Breast epithelium (tissue), 4 donors: ENCODE measurements at regions of chr4 and their contacts with region 1.

Region 1: DNA sequence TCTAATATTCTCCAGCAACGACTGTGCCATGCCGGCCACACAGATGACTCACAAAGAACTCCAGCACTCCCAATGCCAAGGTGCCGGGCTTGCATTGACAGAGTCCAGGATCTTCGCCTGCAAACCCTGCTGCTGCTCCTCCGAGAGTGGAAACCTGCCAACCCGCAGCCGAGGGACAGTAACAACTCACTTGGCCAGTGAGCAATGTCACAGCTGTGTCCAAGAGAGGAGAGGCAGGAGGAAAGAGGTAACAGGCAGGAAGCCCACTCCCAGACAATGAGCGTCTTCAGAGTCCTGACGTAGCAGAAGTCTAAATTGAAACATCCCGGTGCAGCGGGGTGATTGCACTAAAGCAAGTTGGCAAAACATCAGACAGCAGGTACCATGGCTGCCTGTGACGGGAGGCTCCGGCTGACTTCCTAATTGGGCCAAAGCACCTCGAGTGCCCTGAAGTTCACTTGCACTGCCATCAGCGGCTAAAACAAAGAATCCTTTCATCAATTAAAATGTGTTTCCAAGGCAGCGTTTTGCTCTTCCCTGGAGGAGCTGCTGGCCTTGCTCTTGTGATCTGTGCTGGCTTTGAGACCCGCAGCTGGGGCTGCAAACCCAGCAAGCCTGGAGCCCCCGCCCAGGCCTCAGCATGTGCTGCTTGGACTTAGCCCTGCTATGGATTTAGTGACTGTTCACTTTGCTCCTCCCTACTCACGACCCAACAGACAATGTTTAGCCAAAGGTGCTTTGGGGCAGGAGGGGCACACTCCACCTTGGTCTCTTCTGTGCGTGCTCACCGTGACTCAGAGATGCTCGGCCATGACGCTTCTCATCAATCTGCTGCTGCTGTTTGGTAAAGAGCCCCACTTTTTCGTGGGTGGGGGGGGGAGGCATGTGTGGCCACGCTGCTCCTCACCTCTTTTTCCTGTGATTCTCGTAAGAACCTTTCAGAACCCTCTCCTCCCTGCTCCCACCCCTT is 36.5 kb downstream of the DCTD start:
- DNase-seq: peak; percentile 63 to 71
- H3K4me3 ChIP-seq: peak overlapping the region in 2 of 3 donors; percentile 37 to 50
- H3K27ac ChIP-seq: peak overlapping the region; percentile 59 to 60
- H3K4me1 ChIP-seq: no peaks in the 10 kb centered on the region
- H3K27me3 ChIP-seq: no peaks in the 10 kb centered on the region
- CTCF ChIP-seq: no peak
- POLR2A ChIP-seq: no peak

Region 2: DNA sequence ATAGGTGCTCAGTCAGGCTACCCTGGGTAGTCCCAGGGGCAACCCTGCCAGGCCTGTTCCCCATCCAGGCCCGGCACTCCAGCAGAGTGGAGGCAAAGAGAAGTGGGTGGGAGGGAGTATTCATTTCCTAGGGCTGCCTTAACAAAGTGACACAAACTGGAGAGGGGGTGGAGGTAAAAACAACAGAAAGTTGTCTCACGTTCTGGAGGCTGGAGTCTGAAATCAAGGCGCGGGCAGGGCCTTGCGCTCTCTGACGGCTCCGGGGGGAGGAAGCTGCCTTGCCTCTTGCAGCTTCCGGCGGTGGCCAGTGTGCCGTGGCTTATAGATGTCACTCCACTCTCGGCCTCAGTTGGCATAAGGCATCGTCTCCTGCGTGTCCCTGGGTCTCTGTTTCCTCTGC is 54.3 kb before region 1 on chr4:
- intact Hi-C with region 1: no loop called
- DNase-seq: no peak
- H3K4me3 ChIP-seq: no peak overlapping the region
- H3K27ac ChIP-seq: no peak overlapping the region
- H3K4me1 ChIP-seq: no peaks in the 10 kb centered on the region
- H3K27me3 ChIP-seq: no peaks in the 10 kb centered on the region
- CTCF ChIP-seq: no peak
- POLR2A ChIP-seq: no peak

Region 3: GRCh38 chr4:182862141-182862875 is 18.4 kb before region 1 on chr4:
- intact Hi-C with region 1: no loop called
- DNase-seq: no peak
- H3K4me3 ChIP-seq: peak overlapping the region in 2 of 3 donors; percentile 19 to 26
- H3K27ac ChIP-seq: no peak overlapping the region
- H3K4me1 ChIP-seq: no peaks in the 10 kb centered on the region
- H3K27me3 ChIP-seq: no peaks in the 10 kb centered on the region
- CTCF ChIP-seq: no peak
- POLR2A ChIP-seq: no peak

Region 4: GRCh38 chr4:183700404-183700803 is 819.7 kb after region 1 on chr4:
- intact Hi-C with region 1: loop called (anchors 10 kb)
- DNase-seq: peak in 1 of 2 donors; percentile 28
- H3K4me3 ChIP-seq: no peak overlapping the region
- H3K27ac ChIP-seq: no peak overlapping the region
- H3K4me1 ChIP-seq: no peaks in the 10 kb centered on the region
- H3K27me3 ChIP-seq: no peaks in the 10 kb centered on the region
- CTCF ChIP-seq: peak in 1 of 3 donors; percentile 8
- POLR2A ChIP-seq: no peak